Activated CD4-positive, alpha-beta T cell treated with anti-CD3 and anti-CD28 coated beads for 36 hours (primary cell): ENCODE measurements at regions of chr3 and their contacts with region 1.

Region 1: GRCh38 chr3:48556793-48557626 is at the start of gene PFKFB4:
- DNase-seq: peak; percentile 100
- ATAC-seq: peak; percentile 91
- H3K4me3 Mint-ChIP-seq: peak within 1 kb of the TSS; percentile 87
- H3K27ac Mint-ChIP-seq: peak within 1 kb of the TSS; percentile 93
- H3K4me1 Mint-ChIP-seq: peaks cover 23% of the 10 kb centered on the region
- H3K27me3 Mint-ChIP-seq: no peaks in the 10 kb centered on the region
- total RNA-seq, gene PFKFB4: 58.4 to 63.7 TPM

Region 2: DNA sequence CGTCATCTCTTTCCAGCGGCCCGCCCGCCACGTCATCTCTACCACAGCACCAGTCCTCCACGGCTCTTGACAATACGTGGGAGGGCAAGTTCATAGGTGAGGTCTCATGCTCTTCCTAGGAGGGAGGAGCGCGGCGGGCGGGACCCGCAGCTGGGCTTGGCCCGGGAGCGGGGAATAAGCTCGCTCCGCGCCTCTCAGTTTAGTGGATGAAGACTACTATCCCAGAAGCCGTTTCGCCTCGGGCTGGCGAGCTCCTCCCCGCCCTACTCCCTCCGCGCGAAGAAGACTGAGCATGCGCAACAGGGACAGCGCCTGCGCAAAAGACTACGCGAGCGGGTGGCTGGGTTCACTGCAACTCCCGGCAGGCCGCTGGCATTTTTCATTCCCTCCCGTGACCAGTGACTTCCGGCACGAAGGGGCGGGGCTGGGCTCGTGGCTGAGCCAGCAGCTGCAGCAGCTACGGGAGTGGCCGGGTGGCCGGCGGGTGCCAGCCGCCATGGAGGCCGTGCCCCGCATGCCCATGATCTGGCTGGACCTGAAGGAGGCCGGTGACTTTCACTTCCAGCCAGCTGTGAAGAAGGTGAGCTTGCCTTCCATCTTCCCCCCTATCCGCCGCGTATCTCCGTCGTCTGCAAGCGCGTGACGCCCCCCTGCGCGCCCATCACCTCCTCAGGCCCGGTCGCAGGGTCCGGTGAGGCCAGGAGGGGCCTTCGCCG is 1176.3 kb before region 1 on chr3 and contains the start of gene PTPN23:
- CTCF ChIA-PET with region 1: no interaction called
- POLR2A ChIA-PET with region 1: no interaction called
- intact Hi-C with region 1: loop called in 1 of 2 experiments (anchors 2 kb)
- DNase-seq: peak; percentile 99
- ATAC-seq: peak; percentile 81
- H3K4me3 Mint-ChIP-seq: peak within 1 kb of the TSS; percentile 86
- H3K27ac Mint-ChIP-seq: peak within 1 kb of the TSS; percentile 99
- H3K4me1 Mint-ChIP-seq: peaks cover 39% of the 10 kb centered on the region
- H3K27me3 Mint-ChIP-seq: no peaks in the 10 kb centered on the region
- total RNA-seq, gene PTPN23: 25.9 to 29.4 TPM

Region 3: GRCh38 chr3:48112813-48113212 is 444.2 kb before region 1 on chr3:
- CTCF ChIA-PET with region 1: no interaction called
- POLR2A ChIA-PET with region 1: no interaction called
- intact Hi-C with region 1: no loop called
- DNase-seq: no peak
- ATAC-seq: no peak
- H3K4me3 Mint-ChIP-seq: peak overlapping the region; percentile 14
- H3K27ac Mint-ChIP-seq: peak overlapping the region; percentile 76
- H3K4me1 Mint-ChIP-seq: peaks cover 10% of the 10 kb centered on the region
- H3K27me3 Mint-ChIP-seq: no peaks in the 10 kb centered on the region

Region 4: DNA sequence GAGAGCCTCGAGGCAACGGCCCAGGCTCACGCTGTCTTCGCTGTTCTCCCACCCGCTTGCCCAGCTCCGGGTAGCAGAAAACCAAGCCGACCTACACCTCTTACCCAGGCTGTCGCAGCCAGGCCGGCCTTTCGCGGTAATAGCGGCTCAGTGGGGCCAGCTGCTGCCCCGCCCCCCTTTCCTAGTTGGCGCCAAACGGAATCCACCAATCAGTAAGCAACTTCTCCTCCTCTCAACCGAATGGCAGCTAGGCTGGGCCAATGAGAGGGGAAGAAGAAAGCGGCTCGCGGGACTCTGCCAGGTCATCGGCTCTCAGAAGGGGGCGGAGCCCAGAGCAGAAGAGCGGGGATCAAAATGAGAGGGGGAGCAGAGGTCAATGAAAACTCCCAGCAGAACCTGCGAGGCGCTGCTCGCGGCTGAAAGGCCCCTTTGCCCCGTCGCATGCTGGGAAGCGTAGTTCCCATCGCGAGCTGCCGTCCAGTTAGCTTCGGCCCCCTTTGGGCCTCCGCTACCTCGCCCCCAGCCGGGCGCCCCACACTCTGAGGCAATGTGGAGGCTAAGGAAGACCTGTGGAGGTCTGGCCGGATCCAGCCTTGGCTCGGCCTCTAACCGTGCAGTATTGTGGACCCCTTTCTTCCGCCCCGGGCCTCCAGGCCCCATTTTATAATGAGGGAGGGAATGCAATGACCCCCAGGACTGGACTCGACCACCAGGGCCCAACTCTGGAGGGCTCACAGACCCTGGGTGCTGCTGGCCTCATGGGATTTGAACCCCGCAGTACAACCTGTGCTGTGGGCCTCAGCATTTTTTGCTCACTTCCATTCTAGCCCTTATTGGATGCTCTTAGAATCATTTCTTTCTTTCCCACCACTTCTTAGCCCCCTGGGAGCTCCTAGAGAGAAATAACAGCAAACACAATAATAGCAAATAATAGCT is 368.5 kb before region 1 on chr3 and contains the start of gene CDC25A:
- CTCF ChIA-PET with region 1: interaction called, 3 read pairs
- POLR2A ChIA-PET with region 1: interaction called, 3 read pairs
- intact Hi-C with region 1: loop called in 1 of 2 experiments (anchors 1 kb)
- DNase-seq: peak; percentile 98
- ATAC-seq: peak; percentile 99
- H3K4me3 Mint-ChIP-seq: peak within 1 kb of the TSS; percentile 96
- H3K27ac Mint-ChIP-seq: peak within 1 kb of the TSS; percentile 79
- H3K4me1 Mint-ChIP-seq: peaks cover 15% of the 10 kb centered on the region
- H3K27me3 Mint-ChIP-seq: peaks cover 7% of the 10 kb centered on the region
- total RNA-seq, gene CDC25A: 32.5 to 33.9 TPM

Region 5: GRCh38 chr3:48294611-48295263 is 262.3 kb before region 1 on chr3:
- CTCF ChIA-PET with region 1: no interaction called
- POLR2A ChIA-PET with region 1: no interaction called
- intact Hi-C with region 1: no loop called
- DNase-seq: no peak
- ATAC-seq: no peak
- H3K4me3 Mint-ChIP-seq: no peak overlapping the region
- H3K27ac Mint-ChIP-seq: no peak overlapping the region
- H3K4me1 Mint-ChIP-seq: peaks cover 10% of the 10 kb centered on the region
- H3K27me3 Mint-ChIP-seq: no peaks in the 10 kb centered on the region

Region 6: GRCh38 chr3:48400824-48401433 is 156.1 kb before region 1 on chr3:
- CTCF ChIA-PET with region 1: interaction called, 39 read pairs
- POLR2A ChIA-PET with region 1: interaction called, 5 read pairs
- intact Hi-C with region 1: loop called in 1 of 2 experiments (anchors 1 kb)
- DNase-seq: peak; percentile 76
- ATAC-seq: peak; percentile 84
- H3K4me3 Mint-ChIP-seq: no peak overlapping the region
- H3K27ac Mint-ChIP-seq: peak overlapping the region; percentile 31
- H3K4me1 Mint-ChIP-seq: no peaks in the 10 kb centered on the region
- H3K27me3 Mint-ChIP-seq: no peaks in the 10 kb centered on the region

Region 7: GRCh38 chr3:48507351-48508061 is 49.5 kb before region 1 on chr3:
- CTCF ChIA-PET with region 1: interaction called, 3 read pairs
- POLR2A ChIA-PET with region 1: no interaction called
- intact Hi-C with region 1: loop called in 1 of 2 experiments (anchors 2 kb)
- DNase-seq: peak; percentile 83
- ATAC-seq: peak; percentile 82
- H3K4me3 Mint-ChIP-seq: peak overlapping the region; percentile 28
- H3K27ac Mint-ChIP-seq: peak overlapping the region; percentile 80
- H3K4me1 Mint-ChIP-seq: peaks cover 45% of the 10 kb centered on the region
- H3K27me3 Mint-ChIP-seq: no peaks in the 10 kb centered on the region

Region 8: GRCh38 chr3:48685602-48686511 is 128.8 kb after region 1 on chr3 and contains the start of gene NCKIPSD:
- CTCF ChIA-PET with region 1: no interaction called
- POLR2A ChIA-PET with region 1: no interaction called
- intact Hi-C with region 1: loop called in 1 of 2 experiments (anchors 1 kb)
- DNase-seq: peak; percentile 96
- ATAC-seq: peak; percentile 94
- H3K4me3 Mint-ChIP-seq: peak within 1 kb of the TSS; percentile 82
- H3K27ac Mint-ChIP-seq: peak within 1 kb of the TSS; percentile 68
- H3K4me1 Mint-ChIP-seq: peaks cover 16% of the 10 kb centered on the region
- H3K27me3 Mint-ChIP-seq: no peaks in the 10 kb centered on the region
- total RNA-seq, gene NCKIPSD: 61.0 to 67.3 TPM

Region 9: GRCh38 chr3:49007068-49007770 is 450.2 kb after region 1 on chr3 and contains the start of gene WDR6:
- CTCF ChIA-PET with region 1: no interaction called
- POLR2A ChIA-PET with region 1: interaction called, 3 read pairs
- intact Hi-C with region 1: loop called in 1 of 2 experiments (anchors 1 kb)
- DNase-seq: peak; percentile 99
- ATAC-seq: peak; percentile 90
- H3K4me3 Mint-ChIP-seq: peak within 1 kb of the TSS; percentile 100
- H3K27ac Mint-ChIP-seq: peak within 1 kb of the TSS; percentile 100
- H3K4me1 Mint-ChIP-seq: peaks cover 16% of the 10 kb centered on the region
- H3K27me3 Mint-ChIP-seq: no peaks in the 10 kb centered on the region
- total RNA-seq, gene WDR6: 109 to 127 TPM